ENCODE measurements at regions of chr1 and their contacts with region 1.

Region 1: DNA sequence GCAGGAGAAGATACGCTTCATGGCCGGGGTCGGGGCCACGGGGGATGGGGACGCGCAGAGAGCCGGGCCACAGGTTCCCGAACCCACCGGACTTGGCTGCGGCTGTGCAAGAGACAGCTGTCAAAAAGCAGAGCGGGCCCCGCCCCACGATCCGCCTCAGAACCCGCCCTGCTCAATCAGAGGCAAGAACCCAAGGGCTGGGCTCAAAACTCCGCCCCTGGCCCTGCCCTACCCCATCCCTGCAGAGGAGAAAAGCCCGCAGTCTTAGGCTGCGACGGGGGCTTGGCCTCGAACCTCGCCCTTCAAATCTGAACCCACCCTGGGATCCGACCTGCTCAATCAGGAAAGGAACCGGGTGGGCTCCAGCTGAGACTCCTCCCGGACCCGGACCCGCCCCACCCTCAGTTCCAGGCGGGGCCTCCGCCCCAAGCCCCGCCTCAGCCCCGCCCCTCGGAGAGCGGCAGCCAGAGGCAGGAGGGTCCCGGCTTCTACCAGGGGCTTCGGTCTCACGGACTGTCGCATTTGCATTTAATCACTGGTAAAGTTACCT is at the start of gene ANKRD35:
- DNase-seq: peak; percentile 92
- ATAC-seq: peak; percentile 100
- H3K4me3 Mint-ChIP-seq: peak within 1 kb of the TSS; percentile 72
- H3K27ac Mint-ChIP-seq: no peak within 1 kb of the TSS
- H3K4me1 Mint-ChIP-seq: peaks cover 14% of the 10 kb centered on the region
- H3K27me3 Mint-ChIP-seq: peaks cover 17% of the 10 kb centered on the region
- total RNA-seq, gene ANKRD35: 0.30 to 0.55 TPM

Region 2: DNA sequence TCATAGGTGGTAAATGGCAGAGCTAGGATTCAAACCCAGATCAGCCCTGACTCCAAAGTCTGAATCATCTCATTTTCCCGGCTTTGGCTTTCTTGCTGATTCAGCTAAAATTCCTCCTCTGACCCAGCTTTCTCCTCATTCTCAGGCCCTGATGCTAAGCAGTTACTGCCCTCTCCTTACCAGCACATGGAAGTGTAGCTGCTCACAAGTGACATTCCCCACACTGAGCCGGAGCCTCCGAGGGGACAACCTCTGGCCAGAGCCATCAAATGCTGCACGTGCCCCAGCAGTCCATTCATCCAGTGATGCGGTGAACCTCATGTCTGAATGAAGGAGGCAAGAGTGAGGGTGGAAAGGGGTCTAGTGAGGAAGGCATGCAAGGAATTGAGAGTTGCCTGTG is 12.9 kb after region 1 on chr1:
- CTCF ChIA-PET with region 1: interaction called, 3 read pairs
- POLR2A ChIA-PET with region 1: no interaction called
- intact Hi-C with region 1: loop called in 1 of 2 experiments (anchors 2 kb)
- DNase-seq: no peak
- ATAC-seq: no peak
- H3K4me3 Mint-ChIP-seq: no peak overlapping the region
- H3K27ac Mint-ChIP-seq: no peak overlapping the region
- H3K4me1 Mint-ChIP-seq: no peaks in the 10 kb centered on the region
- H3K27me3 Mint-ChIP-seq: no peaks in the 10 kb centered on the region

Region 3: GRCh38 chr1:145906954-145907753 is 21.3 kb after region 1 on chr1:
- CTCF ChIA-PET with region 1: interaction called, 20 read pairs
- POLR2A ChIA-PET with region 1: no interaction called
- intact Hi-C with region 1: loop called in 1 of 2 experiments (anchors 2 kb)
- DNase-seq: no peak
- ATAC-seq: no peak
- H3K4me3 Mint-ChIP-seq: no peak overlapping the region
- H3K27ac Mint-ChIP-seq: no peak overlapping the region
- H3K4me1 Mint-ChIP-seq: no peaks in the 10 kb centered on the region
- H3K27me3 Mint-ChIP-seq: no peaks in the 10 kb centered on the region

Region 4: GRCh38 chr1:145918144-145918992 is 32.6 kb after region 1 on chr1 and contains the start of gene PEX11B:
- CTCF ChIA-PET with region 1: no interaction called
- POLR2A ChIA-PET with region 1: no interaction called
- intact Hi-C with region 1: loop called in 1 of 2 experiments (anchors 1 kb)
- DNase-seq: peak; percentile 94
- ATAC-seq: peak; percentile 89
- H3K4me3 Mint-ChIP-seq: peak within 1 kb of the TSS; percentile 93
- H3K27ac Mint-ChIP-seq: peak within 1 kb of the TSS; percentile 94
- H3K4me1 Mint-ChIP-seq: peaks cover 46% of the 10 kb centered on the region
- H3K27me3 Mint-ChIP-seq: no peaks in the 10 kb centered on the region
- total RNA-seq, gene PEX11B: 22.6 to 26.4 TPM

Region 5: DNA sequence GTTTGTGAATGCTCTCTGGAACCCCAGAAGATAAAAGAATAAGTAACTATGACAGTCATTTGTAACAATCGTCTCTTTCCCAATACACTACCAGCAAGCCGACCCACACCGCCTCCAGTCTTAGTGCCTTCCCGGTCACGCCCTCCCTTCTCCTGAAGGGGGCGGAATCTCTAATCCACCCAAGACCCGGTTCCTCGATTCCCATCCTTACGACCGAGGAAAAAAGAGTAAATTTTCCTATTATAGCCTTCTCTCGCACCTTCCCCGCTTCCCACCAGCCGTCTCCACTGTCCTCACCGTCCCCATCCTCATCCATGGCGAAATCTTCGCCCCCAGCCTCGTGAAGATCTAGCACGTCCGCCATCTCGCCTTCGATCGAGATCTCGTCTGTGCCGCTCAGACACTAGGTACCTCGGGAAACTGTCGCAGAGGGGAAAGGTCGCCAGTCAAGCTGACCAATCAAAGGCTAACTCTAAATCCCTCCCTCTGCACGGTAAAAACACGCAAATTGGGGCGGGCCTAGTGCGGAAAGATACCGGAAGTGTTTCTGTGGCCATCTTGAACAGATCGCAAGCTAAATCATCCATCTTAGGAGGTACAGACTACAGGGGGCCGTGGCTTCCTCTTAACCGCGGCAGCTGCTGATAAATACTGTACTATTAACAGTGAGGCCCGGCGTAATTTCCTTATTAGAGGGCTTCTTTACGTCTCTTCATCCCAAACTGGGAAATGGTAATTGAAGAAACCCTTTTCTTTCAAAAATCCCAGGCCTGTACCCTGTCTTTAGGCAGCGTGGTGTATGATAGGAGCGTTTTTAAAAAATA is 41.5 kb after region 1 on chr1 and contains the start of gene RBM8A:
- CTCF ChIA-PET with region 1: interaction called, 3 read pairs
- POLR2A ChIA-PET with region 1: no interaction called
- intact Hi-C with region 1: loop called in 1 of 2 experiments (anchors 2 kb)
- DNase-seq: peak; percentile 96
- ATAC-seq: peak; percentile 97
- H3K4me3 Mint-ChIP-seq: no peak within 1 kb of the TSS
- H3K27ac Mint-ChIP-seq: no peak within 1 kb of the TSS
- H3K4me1 Mint-ChIP-seq: peaks cover 28% of the 10 kb centered on the region
- H3K27me3 Mint-ChIP-seq: no peaks in the 10 kb centered on the region
- total RNA-seq, gene RBM8A: 293 to 330 TPM